HEK293T (cell line): ENCODE measurements at regions of chr12 and their contacts with region 1.

Region 1: DNA sequence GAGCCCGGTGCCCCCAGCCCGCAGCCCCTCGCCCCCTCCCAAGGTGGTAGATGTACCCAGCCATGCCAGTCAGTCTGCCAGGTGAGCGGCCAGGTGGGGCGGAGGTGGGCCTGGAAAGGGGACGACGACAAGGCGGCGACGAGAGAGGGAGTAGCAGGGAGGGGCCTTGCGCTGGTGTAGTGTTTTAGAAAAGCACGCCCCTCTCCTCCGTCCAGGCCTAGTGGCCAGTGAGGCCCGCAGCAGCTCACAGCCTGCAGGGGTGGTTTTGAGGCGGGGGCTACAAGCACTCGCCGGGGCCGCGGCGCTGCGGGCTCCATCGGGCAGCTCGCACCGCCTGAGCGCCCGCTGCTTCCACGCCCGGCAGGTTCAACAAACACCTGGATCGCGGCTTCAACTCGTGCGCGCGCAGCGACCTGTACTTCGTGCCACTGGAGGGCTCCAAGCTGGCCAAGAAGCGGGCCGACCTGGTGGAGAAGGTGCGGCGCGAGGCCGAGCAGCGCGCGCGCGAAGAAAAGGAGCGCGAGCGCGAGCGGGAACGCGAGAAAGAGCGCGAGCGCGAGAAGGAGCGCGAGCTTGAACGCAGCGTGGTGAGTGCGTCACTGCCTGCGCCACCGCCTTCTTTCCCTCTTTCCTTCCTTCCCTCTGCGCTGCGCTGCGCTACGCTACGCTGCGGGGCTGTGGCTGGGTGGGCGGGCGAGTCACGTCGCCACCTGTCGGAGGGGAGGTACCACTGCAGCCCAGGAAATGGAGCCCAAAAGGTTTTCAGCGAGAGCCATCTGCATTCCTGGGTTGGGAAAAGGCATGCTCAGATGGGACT is 5.9 kb upstream of the RNU7-1 start:
- DNase-seq: peak; percentile 84

Region 2: GRCh38 chr12:6867413-6868210 is 70.1 kb before region 1 on chr12 and contains the start of gene TPI1:
- CTCF ChIA-PET with region 1: interaction called, 7 read pairs
- POLR2A ChIA-PET with region 1: interaction called, 63 read pairs
- DNase-seq: peak; percentile 91

Region 3: GRCh38 chr12:6914246-6914946 is 23.3 kb before region 1 on chr12 and contains the start of gene ENO2:
- CTCF ChIA-PET with region 1: interaction called, 3 read pairs
- POLR2A ChIA-PET with region 1: interaction called, 10 read pairs
- DNase-seq: no peak